Activated naive CD4-positive, alpha-beta T cell treated with anti-CD3 and anti-CD28 coated beads for 36 hours (primary cell): ENCODE measurements at regions of chr1 and their contacts with region 1.

Region 1: GRCh38 chr1:223363856-223364684 is at the start of gene SUSD4:
- DNase-seq: peak; percentile 77
- H3K4me3 Mint-ChIP-seq: peak within 1 kb of the TSS; percentile 89
- H3K27ac Mint-ChIP-seq: no peak within 1 kb of the TSS
- H3K4me1 Mint-ChIP-seq: peaks cover 18% of the 10 kb centered on the region
- H3K27me3 Mint-ChIP-seq: peaks cover 10% of the 10 kb centered on the region
- total RNA-seq, gene SUSD4: 1.1 to 1.8 TPM

Region 2: GRCh38 chr1:223258741-223259198 is 105.3 kb before region 1 on chr1:
- CTCF ChIA-PET with region 1: no interaction called
- intact Hi-C with region 1: no loop called
- DNase-seq: no peak
- H3K4me3 Mint-ChIP-seq: no peak overlapping the region
- H3K27ac Mint-ChIP-seq: no peak overlapping the region
- H3K4me1 Mint-ChIP-seq: no peaks in the 10 kb centered on the region
- H3K27me3 Mint-ChIP-seq: no peaks in the 10 kb centered on the region

Region 3: GRCh38 chr1:223683586-223684487 is 319.8 kb after region 1 on chr1:
- CTCF ChIA-PET with region 1: no interaction called
- intact Hi-C with region 1: loop called (anchors 5 kb)
- DNase-seq: peak; percentile 78
- H3K4me3 Mint-ChIP-seq: no peak overlapping the region
- H3K27ac Mint-ChIP-seq: no peak overlapping the region
- H3K4me1 Mint-ChIP-seq: peaks cover 3% of the 10 kb centered on the region
- H3K27me3 Mint-ChIP-seq: no peaks in the 10 kb centered on the region